ENCODE measurements at regions of chr5 and their contacts with region 1.

Region 1: DNA sequence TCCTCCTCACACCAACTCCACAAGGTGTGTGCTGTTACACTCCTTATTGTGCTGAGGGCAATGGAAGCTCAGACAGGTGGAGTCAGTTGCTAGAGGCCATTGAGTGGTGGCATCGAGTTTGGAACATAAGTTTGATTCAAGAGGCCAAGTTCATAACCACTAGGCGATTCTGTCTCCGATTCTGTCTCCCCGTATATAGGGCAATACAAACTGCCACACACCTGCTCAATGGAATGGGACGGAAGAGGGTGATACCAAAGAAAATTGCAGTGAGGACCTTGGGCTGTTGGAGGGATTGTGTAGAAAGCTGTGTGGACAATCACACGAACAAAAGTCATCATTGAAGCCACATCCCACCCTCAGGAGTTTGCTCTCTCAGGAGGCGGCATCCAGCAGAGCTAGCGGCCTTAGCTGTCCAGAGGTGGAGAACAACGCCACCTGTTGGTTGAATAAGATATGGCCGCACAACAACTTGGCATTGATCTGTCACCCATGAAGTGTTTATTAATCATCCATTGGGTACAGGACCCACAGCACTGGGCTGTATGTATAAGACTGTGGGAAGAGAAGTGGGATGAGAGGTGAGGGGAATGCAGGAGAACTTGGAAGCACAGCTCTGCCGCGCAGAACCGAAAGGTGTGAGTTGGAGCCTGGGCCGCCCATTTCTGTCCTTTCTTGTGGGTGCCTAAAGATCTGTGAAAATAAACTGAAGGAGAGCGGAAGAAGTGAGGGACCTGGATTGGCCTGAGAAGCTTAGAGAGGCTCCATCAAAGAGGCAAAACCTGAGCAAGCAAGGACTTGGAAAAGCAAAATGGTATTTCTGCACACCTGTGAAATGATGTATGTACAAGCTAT is 16.1 kb upstream of the NEUROG1 start:
- DNase-seq: peak; percentile 76
- H3K4me3 ChIP-seq: no peak overlapping the region
- H3K27ac ChIP-seq: no peak overlapping the region
- H3K4me1 ChIP-seq: no peaks in the 10 kb centered on the region
- H3K27me3 ChIP-seq: peaks cover 7 to 43% (median 11%) of the 10 kb centered on the region in 3 donors
- CTCF ChIP-seq: peak; percentile 72 to 85 (median 78)
- EP300 ChIP-seq: no peak
- POLR2A ChIP-seq: no peak

Region 2: DNA sequence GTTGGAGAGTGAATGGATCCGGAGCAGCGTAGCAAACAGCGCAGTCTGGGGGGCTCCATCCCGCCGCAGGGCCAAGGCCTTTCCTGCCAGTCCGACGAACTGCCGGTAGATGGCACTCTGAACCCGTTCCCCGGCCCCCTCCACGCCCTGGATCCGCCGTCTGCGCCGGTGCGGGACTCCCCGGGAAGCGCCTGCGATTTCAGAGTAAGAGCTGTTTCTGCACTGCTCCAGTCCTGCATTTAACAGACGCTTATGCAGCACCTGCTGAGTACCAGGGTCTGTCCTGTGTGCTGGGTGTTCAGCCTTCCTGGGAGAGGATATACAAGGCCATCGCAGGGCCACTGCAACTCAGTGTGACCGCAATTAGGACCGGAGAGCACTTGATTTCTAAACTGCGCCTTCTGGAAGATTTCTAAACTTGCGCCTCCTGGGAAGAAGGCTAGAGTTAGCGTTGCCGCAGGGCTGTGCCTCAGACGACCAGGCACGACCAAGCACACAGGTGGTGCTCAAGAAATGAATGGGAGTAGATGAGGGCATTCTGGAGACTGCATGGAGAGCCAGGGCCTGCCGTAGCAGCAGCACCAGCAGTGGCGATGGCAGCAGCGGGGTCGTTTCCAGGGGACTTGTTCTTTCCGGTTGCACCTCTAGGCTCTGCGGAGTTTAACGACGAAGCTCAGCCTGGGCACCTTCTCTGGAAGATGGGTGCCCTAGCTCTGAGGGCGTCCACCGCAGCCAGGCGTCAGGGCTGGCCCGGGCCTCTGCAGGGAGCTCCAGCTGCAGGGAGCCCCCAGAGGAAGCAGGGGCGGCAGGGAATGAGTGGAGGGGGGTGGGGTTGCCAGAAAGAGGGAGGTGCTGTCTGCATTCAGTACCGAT is 85.4 kb before region 1 on chr5:
- intact Hi-C with region 1: loop called (anchors 1 kb)
- DNase-seq: peak; percentile 87
- H3K4me3 ChIP-seq: peak overlapping the region in 3 of 4 donors; percentile 20 to 29 (median 26)
- H3K27ac ChIP-seq: no peak overlapping the region
- H3K4me1 ChIP-seq: peaks cover 0 to 11% (median 4%) of the 10 kb centered on the region in 4 donors
- H3K27me3 ChIP-seq: peaks cover 0 to 27% (median 0%) of the 10 kb centered on the region in 3 donors
- CTCF ChIP-seq: peak; percentile 51 to 90 (median 70)
- EP300 ChIP-seq: no peak
- POLR2A ChIP-seq: no peak